ENCODE measurements at regions of chr6 and their contacts with region 1.

Region 1: GRCh38 chr6:28683944-28684538 is 158.4 kb downstream of the GPX5 start:
- DNase-seq: peak; percentile 62 to 81 (median 66)
- ATAC-seq: peak; percentile 86
- H3K4me3 ChIP-seq: no peak overlapping the region
- H3K27ac ChIP-seq: no peak overlapping the region
- H3K4me1 ChIP-seq: peaks cover 0 to 44% of the 10 kb centered on the region in 2 experiments
- H3K27me3 ChIP-seq: no peaks in the 10 kb centered on the region
- CTCF ChIP-seq: peak; percentile 73 to 86 (median 81)
- EP300 ChIP-seq: no peak
- POLR2A ChIP-seq: no peak
- RAD21 ChIP-seq: peak; percentile 96 to 97

Region 2: GRCh38 chr6:28355743-28356665 is 328.0 kb before region 1 on chr6:
- CTCF ChIA-PET with region 1: no interaction called
- POLR2A ChIA-PET with region 1: no interaction called
- in situ Hi-C with region 1: no loop called
- intact Hi-C with region 1: loop called (anchors 5 kb)
- DNase-seq: peak; percentile 73 to 94 (median 75)
- ATAC-seq: peak; percentile 80
- H3K4me3 ChIP-seq: peak overlapping the region; percentile 42
- H3K27ac ChIP-seq: peak overlapping the region; percentile 76
- H3K4me1 ChIP-seq: peaks cover 44 to 49% of the 10 kb centered on the region in 2 experiments
- H3K27me3 ChIP-seq: no peaks in the 10 kb centered on the region; a peak in 1 of 5 replicates
- CTCF ChIP-seq: peak; percentile 79 to 95 (median 84)
- EP300 ChIP-seq: peak; percentile 57; the same call in 1 of the 2 replicates
- POLR2A ChIP-seq: no peak
- RAD21 ChIP-seq: peak; percentile 91 to 94

Region 3: GRCh38 chr6:28496099-28496779 is 187.8 kb before region 1 on chr6:
- CTCF ChIA-PET with region 1: interaction called, 3 read pairs
- POLR2A ChIA-PET with region 1: no interaction called
- in situ Hi-C with region 1: loop called (anchors 5 kb)
- intact Hi-C with region 1: loop called (anchors 1 kb)
- DNase-seq: no peak
- ATAC-seq: peak; percentile 49; the same call in 2 of the 3 replicates
- H3K4me3 ChIP-seq: no peak overlapping the region
- H3K27ac ChIP-seq: no peak overlapping the region
- H3K4me1 ChIP-seq: peaks cover 0 to 11% of the 10 kb centered on the region in 2 experiments; a peak in 3 of 5 replicates
- H3K27me3 ChIP-seq: no peaks in the 10 kb centered on the region
- CTCF ChIP-seq: peak; percentile 32 to 74 (median 37); a peak in 3 of 6 replicates
- EP300 ChIP-seq: no peak
- POLR2A ChIP-seq: no peak
- RAD21 ChIP-seq: peak; percentile 87 to 88

Region 4: DNA sequence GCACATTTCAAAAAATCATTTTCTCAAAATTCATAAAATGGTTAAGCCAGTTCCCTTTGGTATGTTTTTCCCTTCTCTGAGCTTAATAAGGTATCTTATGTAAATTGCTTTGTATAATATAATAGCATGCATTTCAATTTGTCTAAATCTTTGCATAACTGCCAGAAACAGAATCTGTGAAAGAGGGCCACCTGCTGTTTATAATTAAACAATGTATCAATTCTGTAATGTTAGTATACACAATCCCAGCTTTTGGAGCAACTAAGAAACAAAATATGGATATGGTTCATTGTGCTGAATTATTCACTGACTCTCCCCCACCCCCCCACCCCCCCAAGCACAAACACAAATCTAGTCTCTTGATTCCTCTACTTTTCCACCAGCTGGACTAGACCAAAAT is 103.6 kb before region 1 on chr6:
- CTCF ChIA-PET with region 1: no interaction called
- POLR2A ChIA-PET with region 1: no interaction called
- in situ Hi-C with region 1: no loop called
- intact Hi-C with region 1: loop called (anchors 5 kb)
- DNase-seq: no peak
- ATAC-seq: peak; percentile 58
- H3K4me3 ChIP-seq: no peak overlapping the region
- H3K27ac ChIP-seq: no peak overlapping the region
- H3K4me1 ChIP-seq: peaks cover 0 to 5% of the 10 kb centered on the region in 2 experiments
- H3K27me3 ChIP-seq: no peaks in the 10 kb centered on the region
- CTCF ChIP-seq: peak in 2 of 3 experiments; percentile 28 to 69; a peak in 3 of 6 replicates
- EP300 ChIP-seq: no peak
- POLR2A ChIP-seq: no peak
- RAD21 ChIP-seq: peak; percentile 67 to 84

Region 5: GRCh38 chr6:28758046-28758817 is 74.2 kb after region 1 on chr6:
- CTCF ChIA-PET with region 1: interaction called, 4 read pairs
- POLR2A ChIA-PET with region 1: no interaction called
- in situ Hi-C with region 1: no loop called
- intact Hi-C with region 1: loop called (anchors 2 kb)
- DNase-seq: peak; percentile 70 to 96 (median 72)
- ATAC-seq: peak; percentile 73
- H3K4me3 ChIP-seq: peak overlapping the region; percentile 60
- H3K27ac ChIP-seq: peak overlapping the region; percentile 96
- H3K4me1 ChIP-seq: peaks cover 13 to 18% of the 10 kb centered on the region in 2 experiments; a peak in 4 of 5 replicates
- H3K27me3 ChIP-seq: no peaks in the 10 kb centered on the region
- CTCF ChIP-seq: no peak
- EP300 ChIP-seq: peak; percentile 87
- POLR2A ChIP-seq: 0 out of 2 replicates have a peak, but pooled peaks have one; percentile 61
- RAD21 ChIP-seq: peak in 1 of 2 experiments; percentile 32; a peak in 2 of 4 replicates

Region 6: GRCh38 chr6:28838634-28839442 is 154.8 kb after region 1 on chr6:
- CTCF ChIA-PET with region 1: interaction called, 6 read pairs
- POLR2A ChIA-PET with region 1: interaction called, 3 read pairs
- in situ Hi-C with region 1: no loop called
- intact Hi-C with region 1: loop called (anchors 2 kb)
- DNase-seq: peak; percentile 90 to 96 (median 92)
- ATAC-seq: peak; percentile 94
- H3K4me3 ChIP-seq: peak overlapping the region; percentile 74
- H3K27ac ChIP-seq: peak overlapping the region; percentile 86
- H3K4me1 ChIP-seq: peaks cover 0 to 8% of the 10 kb centered on the region in 2 experiments; a peak in 2 of 5 replicates
- H3K27me3 ChIP-seq: no peaks in the 10 kb centered on the region
- CTCF ChIP-seq: peak; percentile 84 to 93 (median 88)
- EP300 ChIP-seq: no peak; the same call in 1 of the 2 replicates
- POLR2A ChIP-seq: peak; percentile 80
- RAD21 ChIP-seq: peak; percentile 69 to 73

Region 7: GRCh38 chr6:28981833-28982475 is 297.9 kb after region 1 on chr6:
- CTCF ChIA-PET with region 1: no interaction called
- POLR2A ChIA-PET with region 1: no interaction called
- in situ Hi-C with region 1: no loop called
- intact Hi-C with region 1: loop called (anchors 10 kb)
- DNase-seq: peak; percentile 83 to 94 (median 83)
- ATAC-seq: peak; percentile 64
- H3K4me3 ChIP-seq: peak overlapping the region; percentile 56
- H3K27ac ChIP-seq: peak overlapping the region; percentile 97
- H3K4me1 ChIP-seq: peaks cover 24 to 30% of the 10 kb centered on the region in 2 experiments
- H3K27me3 ChIP-seq: no peaks in the 10 kb centered on the region
- CTCF ChIP-seq: peak; percentile 35 to 63 (median 48); a peak in 5 of 6 replicates
- EP300 ChIP-seq: peak; percentile 79
- POLR2A ChIP-seq: no peak
- RAD21 ChIP-seq: peak; percentile 36 to 63; a peak in 3 of 4 replicates